ENCODE measurements at regions of chr2 and their contacts with region 1.

Region 1: GRCh38 chr2:72862239-72862988 is 24.8 kb upstream of the SPR start:
- DNase-seq: peak; percentile 86
- ATAC-seq: peak; percentile 99
- H3K4me3 ChIP-seq: no peak overlapping the region
- H3K27ac ChIP-seq: no peak overlapping the region
- H3K4me1 ChIP-seq: no peaks in the 10 kb centered on the region
- H3K27me3 ChIP-seq: peaks cover 7% of the 10 kb centered on the region
- CTCF ChIP-seq: peak; percentile 99
- POLR2A ChIP-seq: no peak
- RAD21 ChIP-seq: peak; percentile 88

Region 2: GRCh38 chr2:72605836-72606442 is 256.5 kb before region 1 on chr2:
- CTCF ChIA-PET with region 1: no interaction called
- POLR2A ChIA-PET with region 1: no interaction called
- dilution Hi-C with region 1: no loop called
- in situ Hi-C with region 1: no loop called
- intact Hi-C with region 1: loop called (anchors 10 kb)
- DNase-seq: peak; percentile 39
- ATAC-seq: peak; percentile 75
- H3K4me3 ChIP-seq: no peak overlapping the region
- H3K27ac ChIP-seq: no peak overlapping the region
- H3K4me1 ChIP-seq: no peaks in the 10 kb centered on the region
- H3K27me3 ChIP-seq: no peaks in the 10 kb centered on the region
- CTCF ChIP-seq: peak; percentile 68
- POLR2A ChIP-seq: no peak
- RAD21 ChIP-seq: peak; percentile 37; the same call in 1 of the 2 replicates

Region 3: GRCh38 chr2:72770879-72771461 is 91.4 kb before region 1 on chr2:
- CTCF ChIA-PET with region 1: interaction called, 8 read pairs
- POLR2A ChIA-PET with region 1: no interaction called
- dilution Hi-C with region 1: no loop called
- in situ Hi-C with region 1: no loop called
- intact Hi-C with region 1: loop called (anchors 1 kb)
- DNase-seq: peak; percentile 74
- ATAC-seq: no peak
- H3K4me3 ChIP-seq: no peak overlapping the region
- H3K27ac ChIP-seq: no peak overlapping the region
- H3K4me1 ChIP-seq: no peaks in the 10 kb centered on the region
- H3K27me3 ChIP-seq: no peaks in the 10 kb centered on the region
- CTCF ChIP-seq: peak; percentile 92
- POLR2A ChIP-seq: no peak
- RAD21 ChIP-seq: peak; percentile 94

Region 4: GRCh38 chr2:72780477-72780876 is 81.9 kb before region 1 on chr2:
- CTCF ChIA-PET with region 1: interaction called, 10 read pairs
- POLR2A ChIA-PET with region 1: no interaction called
- dilution Hi-C with region 1: no loop called
- in situ Hi-C with region 1: no loop called
- intact Hi-C with region 1: no loop called
- DNase-seq: peak; percentile 56
- ATAC-seq: no peak
- H3K4me3 ChIP-seq: no peak overlapping the region
- H3K27ac ChIP-seq: no peak overlapping the region
- H3K4me1 ChIP-seq: peaks cover 2% of the 10 kb centered on the region; the same call in 1 of the 2 replicates
- H3K27me3 ChIP-seq: no peaks in the 10 kb centered on the region
- CTCF ChIP-seq: no peak
- POLR2A ChIP-seq: no peak
- RAD21 ChIP-seq: no peak